ENCODE measurements at regions of chr14 and their contacts with region 1.

Region 1: DNA sequence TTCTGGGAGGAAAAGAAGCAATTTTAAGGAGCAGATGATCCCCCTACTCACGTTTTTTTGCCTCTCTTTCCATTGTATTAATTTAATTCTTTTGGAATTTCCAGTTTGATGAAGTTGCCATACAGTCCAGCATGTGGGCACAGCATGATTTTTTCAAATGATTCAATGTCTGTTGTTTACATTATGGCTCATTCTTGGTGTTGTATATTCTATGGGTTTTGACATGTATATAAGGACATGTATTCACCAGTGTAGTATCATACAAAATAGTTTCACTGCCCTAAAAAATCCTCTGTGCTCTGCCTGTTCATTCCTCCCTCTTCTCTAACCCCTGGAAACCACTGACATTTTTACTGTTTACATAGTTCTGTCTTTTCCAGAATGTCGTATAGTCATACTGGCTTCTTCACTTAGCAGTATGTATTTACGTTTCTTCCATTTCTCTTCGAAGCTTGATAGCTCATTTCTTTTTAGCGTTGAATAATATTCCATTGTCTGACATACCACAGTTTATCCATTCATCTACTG is 13.3 kb upstream of the KLHDC2 start:
- DNase-seq: no peak

Region 2: GRCh38 chr14:49703965-49704364 is 50.7 kb before region 1 on chr14:
- in situ Hi-C with region 1: loop called (anchors 10 kb)
- DNase-seq: no peak

Region 3: DNA sequence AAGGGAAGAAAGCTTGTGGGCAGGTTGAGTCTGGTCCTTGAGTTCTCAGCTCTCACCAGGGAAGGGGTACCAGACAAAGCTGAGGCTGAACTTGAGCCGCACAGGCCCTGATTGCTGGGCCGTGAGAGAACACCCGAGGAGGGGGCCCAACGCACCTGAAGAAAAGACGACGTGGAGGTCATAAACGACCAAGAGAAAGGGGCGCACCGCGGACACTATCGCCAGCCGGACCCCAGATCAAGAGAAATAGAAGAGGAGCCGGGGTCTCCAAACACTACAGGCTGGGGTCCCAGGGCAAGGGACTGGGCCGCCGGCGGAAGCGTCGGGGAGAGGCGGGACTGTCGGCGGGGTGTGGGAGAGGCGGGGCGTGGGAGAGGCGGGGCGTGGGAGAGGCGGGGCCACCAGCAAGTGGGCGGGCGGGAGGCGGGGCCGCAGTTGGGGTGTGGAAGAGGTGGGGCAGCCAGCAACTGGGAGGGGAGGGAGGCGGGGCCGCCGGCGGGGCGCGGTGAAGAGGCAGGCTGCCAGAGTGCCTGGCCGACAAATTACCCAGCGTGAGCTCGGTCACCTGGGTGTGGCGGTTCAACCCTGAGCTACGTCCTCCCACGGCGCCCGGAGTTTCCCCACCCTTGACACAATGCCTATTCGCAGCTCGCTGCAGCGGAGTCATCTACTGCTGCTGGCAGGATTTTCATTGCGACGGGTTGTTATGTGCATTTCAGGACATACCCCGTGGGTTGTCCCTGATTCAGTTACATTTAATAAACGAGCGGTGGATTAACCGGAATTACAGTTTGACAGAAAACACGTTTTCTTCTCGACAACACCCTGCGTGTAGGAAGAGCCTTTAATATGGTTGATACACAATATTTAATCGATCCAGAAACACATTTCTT is 113.4 kb after region 1 on chr14:
- in situ Hi-C with region 1: no loop called
- DNase-seq: peak; percentile 93

Measured in Caki2 (cell line).